BJ (cell line): ENCODE measurements at regions of chr1 and their contacts with region 1.

Region 1: GRCh38 chr1:179550754-179551682 is 24.7 kb downstream of the NPHS2 start:
- DNase-seq: peak; percentile 39
- H3K4me3 ChIP-seq: no peak overlapping the region
- H3K27me3 ChIP-seq: no peaks in the 10 kb centered on the region
- CTCF ChIP-seq: no peak

Region 2: DNA sequence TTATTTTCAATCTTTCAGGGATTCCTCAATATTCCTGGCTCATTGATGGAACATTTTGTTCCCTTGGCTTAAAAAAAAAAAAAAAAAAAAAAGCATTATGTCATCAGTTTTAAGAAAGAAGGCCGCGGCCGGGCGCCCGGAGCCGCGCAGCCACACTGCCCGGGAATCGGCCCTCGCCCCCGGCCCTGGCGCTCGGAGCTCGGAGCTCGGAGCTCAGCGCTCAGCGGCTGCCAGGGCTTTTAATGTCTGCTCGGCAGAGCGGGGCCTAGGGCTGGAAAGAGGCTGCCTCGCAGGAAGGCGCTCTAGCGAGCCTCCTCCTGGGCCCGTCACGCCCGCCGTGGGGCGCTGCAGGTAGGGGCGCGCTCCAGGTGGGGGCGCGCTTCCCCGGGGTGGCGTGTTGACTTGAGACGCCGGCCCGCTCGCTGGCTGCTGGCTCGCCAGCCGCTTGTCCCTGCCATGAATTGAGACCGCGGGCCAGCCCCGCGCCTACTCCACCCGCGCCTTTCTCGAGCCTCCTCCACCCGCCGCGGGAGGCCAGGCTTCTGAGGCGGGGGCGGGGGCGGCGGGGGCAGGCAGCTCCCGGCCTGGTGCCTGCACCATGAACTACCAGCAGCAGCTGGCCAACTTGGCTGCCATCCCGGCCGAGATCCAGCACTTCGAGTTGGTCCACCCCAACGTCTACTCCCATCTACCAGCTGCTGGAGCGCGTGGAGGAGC is 35.2 kb after region 1 on chr1:
- CTCF ChIA-PET with region 1: interaction called, 3 read pairs
- POLR2A ChIA-PET with region 1: interaction called, 15 read pairs
- DNase-seq: no peak
- H3K4me3 ChIP-seq: peak overlapping the region; percentile 34
- H3K27me3 ChIP-seq: peaks cover 5% of the 10 kb centered on the region; the same call in 1 of the 2 replicates
- CTCF ChIP-seq: peak; percentile 39